B cell (primary cell): ENCODE measurements at regions of chr9 and their contacts with region 1.

Region 1: DNA sequence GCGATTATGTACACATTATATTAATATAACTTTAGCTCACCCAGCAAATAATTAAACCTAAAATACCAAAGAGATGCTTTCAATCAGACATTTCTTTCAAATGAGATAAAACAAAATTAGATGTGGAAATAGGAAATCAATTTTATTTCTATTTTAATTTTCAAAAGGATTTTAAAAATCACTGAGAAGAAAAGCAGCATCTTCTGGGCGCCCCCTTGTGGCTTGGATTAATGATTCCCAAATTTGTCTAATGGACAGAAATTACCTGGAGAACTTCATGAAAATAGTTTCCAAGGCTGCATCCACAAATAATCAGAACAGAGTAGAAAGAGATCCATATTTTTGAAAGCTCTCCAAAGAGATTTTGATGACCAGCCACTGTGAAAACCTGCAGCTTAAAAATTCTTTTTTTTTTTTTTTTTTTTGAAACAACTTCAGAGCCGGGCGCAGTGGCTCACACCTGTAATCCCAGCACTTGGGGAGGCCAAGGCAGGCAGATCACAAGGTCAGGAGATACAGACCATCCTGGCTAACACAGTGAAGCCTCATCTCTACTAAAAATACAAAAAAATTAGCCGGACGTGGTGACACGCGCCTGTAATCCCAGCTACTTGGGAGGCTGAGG is 50.9 kb upstream of the CEMIP2 start:
- DNase-seq: peak; percentile 65
- ATAC-seq: no peak
- H3K4me3 ChIP-seq: no peak overlapping the region
- H3K4me3 Mint-ChIP-seq: no peak overlapping the region
- H3K27ac ChIP-seq: no peak overlapping the region
- H3K27ac Mint-ChIP-seq: no peak overlapping the region
- H3K4me1 ChIP-seq: peaks cover 21 to 24% of the 10 kb centered on the region in 2 donors
- H3K4me1 Mint-ChIP-seq: peaks cover 32% of the 10 kb centered on the region
- H3K27me3 ChIP-seq: no peaks in the 10 kb centered on the region
- H3K27me3 Mint-ChIP-seq: no peaks in the 10 kb centered on the region
- CTCF ChIP-seq: peak; percentile 88

Region 2: DNA sequence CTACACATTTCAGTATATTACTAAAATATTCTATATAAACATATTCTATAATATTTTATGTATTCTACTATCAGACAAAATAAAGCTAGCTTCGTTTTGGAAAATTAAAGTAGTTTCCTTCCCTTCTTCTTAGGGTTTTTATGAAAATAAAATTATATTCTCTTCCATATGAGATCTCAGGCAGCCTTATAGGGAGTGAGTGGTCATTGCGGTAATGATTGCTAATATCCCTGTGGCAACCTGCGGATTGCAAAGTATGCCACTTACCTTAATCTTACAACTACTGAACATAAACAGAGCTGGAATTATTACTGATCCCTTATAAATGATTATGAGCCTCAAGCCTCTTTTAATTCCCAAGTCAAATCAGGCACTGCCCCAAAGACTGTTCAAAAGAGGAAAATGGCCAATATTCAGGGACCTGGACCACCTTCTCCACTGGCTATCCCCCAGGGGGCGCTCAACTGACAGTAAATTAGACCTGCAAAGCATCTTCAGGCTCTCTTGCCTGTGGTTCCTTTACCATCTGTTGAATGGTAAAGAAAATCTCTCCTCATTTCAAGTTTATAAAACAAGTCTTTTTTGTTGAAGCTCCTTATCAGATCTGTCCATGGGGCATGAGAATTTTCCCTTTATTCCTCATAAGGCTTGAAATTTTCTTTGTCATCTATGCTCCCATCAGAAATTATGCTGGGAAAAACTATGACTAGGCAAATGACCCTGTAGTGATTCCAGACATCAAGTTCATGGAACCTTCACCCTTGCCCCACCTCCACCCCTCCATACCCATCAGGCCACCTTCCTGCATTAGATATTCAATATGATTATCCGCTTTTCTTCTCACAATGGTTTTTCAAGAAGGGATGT is 214.8 kb before region 1 on chr9:
- CTCF ChIA-PET with region 1: interaction called, 57 read pairs
- POLR2A ChIA-PET with region 1: no interaction called
- intact Hi-C with region 1: no loop called
- DNase-seq: peak; percentile 75
- ATAC-seq: peak; percentile 68
- H3K4me3 ChIP-seq: no peak overlapping the region
- H3K4me3 Mint-ChIP-seq: no peak overlapping the region
- H3K27ac ChIP-seq: no peak overlapping the region
- H3K27ac Mint-ChIP-seq: no peak overlapping the region
- H3K4me1 ChIP-seq: no peaks in the 10 kb centered on the region
- H3K4me1 Mint-ChIP-seq: no peaks in the 10 kb centered on the region
- H3K27me3 ChIP-seq: no peaks in the 10 kb centered on the region
- H3K27me3 Mint-ChIP-seq: no peaks in the 10 kb centered on the region
- CTCF ChIP-seq: peak; percentile 95

Region 3: DNA sequence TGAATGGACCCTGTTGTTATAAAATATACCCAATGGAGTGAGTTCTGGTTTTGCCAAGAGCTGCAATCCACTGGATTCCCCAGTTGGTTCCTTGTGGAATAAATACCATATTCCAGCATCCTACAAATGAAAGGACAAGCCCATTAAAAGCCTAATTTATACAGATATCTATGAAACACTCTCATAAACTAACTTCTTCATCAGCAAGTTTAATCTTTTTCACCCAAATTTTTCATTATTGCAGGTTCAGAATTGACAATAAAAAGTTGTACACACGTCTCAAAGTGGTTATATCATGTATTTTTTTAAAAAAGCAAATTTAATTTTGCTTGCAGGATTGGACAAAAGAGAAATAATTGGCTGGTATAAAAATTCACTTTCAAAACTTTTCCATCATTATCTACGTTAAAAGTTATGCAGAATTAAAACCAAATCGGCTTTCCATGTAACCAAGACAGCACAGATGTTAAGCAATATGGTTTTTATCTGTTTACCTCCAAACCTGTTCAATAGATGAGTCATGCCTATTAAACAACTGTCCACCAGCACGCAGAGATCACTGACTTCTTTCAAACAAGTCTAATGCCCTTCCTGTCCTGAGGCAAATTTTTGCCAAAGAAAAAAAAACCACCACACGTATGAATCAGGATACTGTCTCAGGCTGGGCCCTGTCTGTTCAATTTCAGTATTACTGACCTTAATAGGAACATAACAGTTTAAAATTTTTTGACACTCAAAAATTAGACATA is 93.5 kb before region 1 on chr9:
- CTCF ChIA-PET with region 1: no interaction called
- POLR2A ChIA-PET with region 1: no interaction called
- intact Hi-C with region 1: no loop called
- DNase-seq: no peak
- ATAC-seq: no peak
- H3K4me3 ChIP-seq: no peak overlapping the region
- H3K4me3 Mint-ChIP-seq: no peak overlapping the region
- H3K27ac ChIP-seq: no peak overlapping the region
- H3K27ac Mint-ChIP-seq: no peak overlapping the region
- H3K4me1 ChIP-seq: no peaks in the 10 kb centered on the region
- H3K4me1 Mint-ChIP-seq: no peaks in the 10 kb centered on the region
- H3K27me3 ChIP-seq: no peaks in the 10 kb centered on the region
- H3K27me3 Mint-ChIP-seq: no peaks in the 10 kb centered on the region
- CTCF ChIP-seq: no peak

Region 4: DNA sequence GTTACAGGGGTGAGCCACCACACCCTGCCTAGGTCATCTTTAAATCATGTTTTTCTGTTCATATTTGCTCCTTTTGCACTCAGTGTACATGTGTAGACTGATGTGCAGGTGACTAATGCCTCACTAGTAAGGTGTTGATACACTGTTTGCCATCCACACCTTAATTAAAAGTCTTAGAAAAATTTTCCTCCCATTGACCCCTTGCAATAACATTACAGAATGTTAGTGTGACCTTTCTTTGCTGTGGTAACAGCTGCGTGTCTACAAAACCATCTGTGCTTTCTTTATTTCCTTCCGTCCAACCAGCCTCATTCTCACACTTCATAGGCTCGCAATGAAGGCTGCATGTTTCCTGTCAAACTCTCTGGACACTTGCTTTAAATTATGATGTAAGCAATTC is 44.3 kb before region 1 on chr9:
- CTCF ChIA-PET with region 1: interaction called, 143 read pairs
- POLR2A ChIA-PET with region 1: no interaction called
- intact Hi-C with region 1: no loop called
- DNase-seq: no peak
- ATAC-seq: peak; percentile 65
- H3K4me3 ChIP-seq: no peak overlapping the region
- H3K4me3 Mint-ChIP-seq: peak overlapping the region; percentile 33
- H3K27ac ChIP-seq: peak overlapping the region; percentile 36 to 52
- H3K27ac Mint-ChIP-seq: peak overlapping the region; percentile 77
- H3K4me1 ChIP-seq: peaks cover 25 to 33% of the 10 kb centered on the region in 2 donors
- H3K4me1 Mint-ChIP-seq: peaks cover 23% of the 10 kb centered on the region
- H3K27me3 ChIP-seq: no peaks in the 10 kb centered on the region
- H3K27me3 Mint-ChIP-seq: no peaks in the 10 kb centered on the region
- CTCF ChIP-seq: no peak

Region 5: DNA sequence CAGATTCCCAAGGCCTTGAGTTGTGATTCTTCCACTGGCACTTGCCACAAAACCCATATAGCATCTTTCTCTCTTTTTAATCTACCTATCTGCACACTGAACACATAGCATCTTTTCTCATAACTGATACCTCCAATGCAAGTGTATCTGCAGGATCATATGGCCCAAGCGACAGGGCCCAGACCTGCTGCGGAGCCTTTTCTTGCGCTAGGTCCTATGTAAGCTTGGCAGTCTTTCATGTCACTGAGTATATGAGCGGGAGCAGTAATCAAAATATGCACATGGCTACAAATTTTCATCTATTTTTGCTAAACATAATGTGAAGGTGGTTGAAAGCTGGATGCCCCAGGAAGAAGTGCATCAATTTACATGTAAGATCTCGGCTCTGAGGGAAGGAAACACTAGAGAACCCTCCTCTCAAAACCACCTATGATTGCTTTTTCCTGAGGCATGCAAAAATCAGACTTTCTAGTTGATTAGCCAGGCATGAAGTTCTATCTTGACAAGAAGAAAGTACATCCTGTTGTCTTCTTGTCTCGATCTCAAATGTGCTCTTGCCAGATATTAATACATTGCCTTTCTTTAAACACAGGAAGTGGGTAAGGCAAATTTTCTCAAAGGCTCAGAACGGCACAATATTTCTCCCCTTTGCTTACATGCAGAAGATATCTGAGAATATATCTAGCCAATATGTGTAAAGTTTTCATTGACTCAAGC is 24.0 kb before region 1 on chr9:
- CTCF ChIA-PET with region 1: interaction called, 96 read pairs
- POLR2A ChIA-PET with region 1: no interaction called
- intact Hi-C with region 1: no loop called
- DNase-seq: peak; percentile 87
- ATAC-seq: peak; percentile 87
- H3K4me3 ChIP-seq: peak overlapping the region in 1 of 5 experiments; percentile 40
- H3K4me3 Mint-ChIP-seq: peak overlapping the region; percentile 92
- H3K27ac ChIP-seq: peak overlapping the region; percentile 84 to 92
- H3K27ac Mint-ChIP-seq: peak overlapping the region; percentile 93
- H3K4me1 ChIP-seq: peaks cover 77 to 80% of the 10 kb centered on the region in 2 donors
- H3K4me1 Mint-ChIP-seq: peaks cover 70% of the 10 kb centered on the region
- H3K27me3 ChIP-seq: no peaks in the 10 kb centered on the region
- H3K27me3 Mint-ChIP-seq: no peaks in the 10 kb centered on the region
- CTCF ChIP-seq: no peak

Region 6: GRCh38 chr9:71830929-71831328 is 11.7 kb after region 1 on chr9:
- CTCF ChIA-PET with region 1: interaction called, 10 read pairs
- POLR2A ChIA-PET with region 1: no interaction called
- intact Hi-C with region 1: no loop called
- DNase-seq: no peak
- ATAC-seq: no peak
- H3K4me3 ChIP-seq: no peak overlapping the region
- H3K4me3 Mint-ChIP-seq: no peak overlapping the region
- H3K27ac ChIP-seq: no peak overlapping the region
- H3K27ac Mint-ChIP-seq: no peak overlapping the region
- H3K4me1 ChIP-seq: no peaks in the 10 kb centered on the region
- H3K4me1 Mint-ChIP-seq: peaks cover 5% of the 10 kb centered on the region
- H3K27me3 ChIP-seq: no peaks in the 10 kb centered on the region
- H3K27me3 Mint-ChIP-seq: peaks cover 5% of the 10 kb centered on the region
- CTCF ChIP-seq: no peak

Region 7: GRCh38 chr9:72022841-72023240 is 203.6 kb after region 1 on chr9:
- CTCF ChIA-PET with region 1: interaction called, 11 read pairs
- POLR2A ChIA-PET with region 1: no interaction called
- intact Hi-C with region 1: no loop called
- DNase-seq: no peak
- ATAC-seq: no peak
- H3K4me3 ChIP-seq: no peak overlapping the region
- H3K4me3 Mint-ChIP-seq: no peak overlapping the region
- H3K27ac ChIP-seq: no peak overlapping the region
- H3K27ac Mint-ChIP-seq: no peak overlapping the region
- H3K4me1 ChIP-seq: peaks cover 0 to 4% of the 10 kb centered on the region in 2 donors
- H3K4me1 Mint-ChIP-seq: peaks cover 5% of the 10 kb centered on the region
- H3K27me3 ChIP-seq: peaks cover 0 to 1% (median 0%) of the 10 kb centered on the region in 4 experiments
- H3K27me3 Mint-ChIP-seq: peaks cover 7% of the 10 kb centered on the region
- CTCF ChIP-seq: no peak